Activated CD4-positive, alpha-beta memory T cell treated with anti-CD3 and anti-CD28 coated beads for 36 hours (primary cell): ENCODE measurements at regions of chr16 and their contacts with region 1.

Region 1: GRCh38 chr16:19502395-19503131 is 19.3 kb downstream of the GDE1 start:
- DNase-seq: peak; percentile 76
- H3K4me3 Mint-ChIP-seq: no peak overlapping the region
- H3K27ac Mint-ChIP-seq: no peak overlapping the region
- H3K4me1 Mint-ChIP-seq: no peaks in the 10 kb centered on the region
- H3K27me3 Mint-ChIP-seq: no peaks in the 10 kb centered on the region

Region 2: GRCh38 chr16:19307587-19308241 is 194.8 kb before region 1 on chr16:
- CTCF ChIA-PET with region 1: no interaction called
- POLR2A ChIA-PET with region 1: no interaction called
- intact Hi-C with region 1: no loop called
- DNase-seq: peak; percentile 12
- H3K4me3 Mint-ChIP-seq: no peak overlapping the region
- H3K27ac Mint-ChIP-seq: no peak overlapping the region
- H3K4me1 Mint-ChIP-seq: no peaks in the 10 kb centered on the region
- H3K27me3 Mint-ChIP-seq: no peaks in the 10 kb centered on the region

Region 3: GRCh38 chr16:19389246-19389645 is 113.3 kb before region 1 on chr16:
- CTCF ChIA-PET with region 1: interaction called, 32 read pairs
- POLR2A ChIA-PET with region 1: no interaction called
- intact Hi-C with region 1: loop called (anchors 1 kb)
- DNase-seq: peak; percentile 65
- H3K4me3 Mint-ChIP-seq: no peak overlapping the region
- H3K27ac Mint-ChIP-seq: no peak overlapping the region
- H3K4me1 Mint-ChIP-seq: no peaks in the 10 kb centered on the region
- H3K27me3 Mint-ChIP-seq: peaks cover 14% of the 10 kb centered on the region

Region 4: GRCh38 chr16:19463487-19463886 is 39.1 kb before region 1 on chr16:
- CTCF ChIA-PET with region 1: no interaction called
- POLR2A ChIA-PET with region 1: no interaction called
- intact Hi-C with region 1: no loop called
- DNase-seq: no peak
- H3K4me3 Mint-ChIP-seq: no peak overlapping the region
- H3K27ac Mint-ChIP-seq: no peak overlapping the region
- H3K4me1 Mint-ChIP-seq: no peaks in the 10 kb centered on the region
- H3K27me3 Mint-ChIP-seq: peaks cover 2% of the 10 kb centered on the region

Region 5: DNA sequence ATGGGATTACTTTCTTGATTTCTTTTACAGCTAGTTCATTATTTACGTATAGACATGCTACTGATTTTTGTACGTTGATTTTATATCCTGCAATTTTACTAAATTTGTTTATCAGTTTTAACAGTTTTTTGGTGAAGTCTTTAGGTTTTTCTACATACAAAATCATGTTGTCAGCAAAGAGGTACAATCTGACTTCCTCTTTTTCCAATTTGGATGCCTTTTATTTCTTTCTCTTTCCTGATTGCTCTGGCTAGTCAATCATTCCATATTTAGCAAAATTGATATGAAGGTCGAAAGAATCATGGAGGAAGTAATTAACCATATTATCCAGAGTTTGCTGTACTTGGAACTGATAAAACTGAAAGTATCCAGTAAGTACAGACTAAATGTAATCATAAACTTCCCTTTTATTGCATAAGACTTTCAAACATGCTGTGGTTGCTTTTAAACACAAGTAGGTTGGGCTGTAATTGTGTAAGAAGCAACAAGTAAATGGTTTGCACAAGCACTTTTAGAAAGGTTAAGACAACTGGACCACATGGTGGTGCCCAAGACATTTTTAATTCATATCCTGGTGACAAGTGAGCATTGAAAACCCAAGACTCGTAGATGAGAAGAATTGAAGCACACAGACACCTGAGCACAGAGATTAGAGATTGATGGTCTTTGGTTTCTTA is 11.0 kb after region 1 on chr16:
- CTCF ChIA-PET with region 1: interaction called, 17 read pairs
- POLR2A ChIA-PET with region 1: no interaction called
- intact Hi-C with region 1: no loop called
- DNase-seq: no peak
- H3K4me3 Mint-ChIP-seq: no peak overlapping the region
- H3K27ac Mint-ChIP-seq: no peak overlapping the region
- H3K4me1 Mint-ChIP-seq: peaks cover 18% of the 10 kb centered on the region
- H3K27me3 Mint-ChIP-seq: no peaks in the 10 kb centered on the region